ENCODE measurements at regions of chr11 and their contacts with region 1.

Region 1: GRCh38 chr11:76799066-76799804 is 16.1 kb downstream of the TSKU start:
- DNase-seq: peak; percentile 93
- ATAC-seq: peak; percentile 91

Region 2: GRCh38 chr11:76424379-76424778 is 374.9 kb before region 1 on chr11:
- intact Hi-C with region 1: no loop called
- DNase-seq: no peak
- ATAC-seq: no peak

Region 3: DNA sequence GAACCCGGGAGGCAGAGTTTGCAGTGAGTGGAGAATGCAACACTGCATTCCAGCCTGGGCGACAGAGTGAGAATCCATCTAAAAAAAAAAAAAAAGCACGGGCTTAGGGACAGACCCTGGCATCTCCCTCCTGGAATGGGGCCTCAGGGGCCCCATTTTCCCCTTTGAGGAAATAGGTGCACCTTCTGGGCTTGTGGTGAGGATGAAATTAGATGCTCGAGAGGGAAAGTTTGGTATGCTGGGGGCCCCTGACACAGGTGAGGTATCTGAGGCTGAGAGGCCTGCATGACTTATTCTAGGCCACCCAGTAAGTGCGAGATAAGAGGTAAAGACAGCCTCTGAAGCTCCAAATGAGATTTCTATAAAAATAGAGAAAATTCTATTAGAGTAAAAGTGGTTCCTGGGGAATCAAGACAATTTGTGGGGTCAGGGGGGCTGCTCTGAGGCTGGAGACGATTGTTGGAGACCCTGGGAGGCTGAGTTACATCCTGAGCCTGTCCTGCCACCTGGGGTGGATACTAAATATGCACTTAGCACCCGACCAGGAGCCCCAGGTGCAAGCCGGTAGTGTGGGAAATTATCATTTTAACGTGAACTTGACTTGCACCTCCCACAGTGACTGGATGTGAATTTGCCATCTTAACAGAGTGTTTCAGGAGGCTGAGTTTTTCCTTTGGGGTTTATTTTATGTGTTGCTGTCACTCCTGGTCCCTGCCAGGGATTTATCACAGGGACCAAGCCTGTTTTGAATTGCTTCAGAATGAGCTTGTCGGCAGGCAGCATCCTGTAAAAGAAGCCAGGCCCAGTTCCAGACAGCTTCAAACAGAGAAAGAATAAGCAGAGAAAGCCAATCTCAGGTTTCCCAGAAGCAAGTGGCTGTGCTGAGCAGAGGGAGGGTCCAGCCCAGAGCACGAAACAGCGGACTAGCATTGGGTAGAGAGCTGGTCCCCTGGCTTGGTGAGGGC is 64.5 kb before region 1 on chr11:
- intact Hi-C with region 1: loop called (anchors 1 kb)
- DNase-seq: no peak
- ATAC-seq: no peak

Region 4: DNA sequence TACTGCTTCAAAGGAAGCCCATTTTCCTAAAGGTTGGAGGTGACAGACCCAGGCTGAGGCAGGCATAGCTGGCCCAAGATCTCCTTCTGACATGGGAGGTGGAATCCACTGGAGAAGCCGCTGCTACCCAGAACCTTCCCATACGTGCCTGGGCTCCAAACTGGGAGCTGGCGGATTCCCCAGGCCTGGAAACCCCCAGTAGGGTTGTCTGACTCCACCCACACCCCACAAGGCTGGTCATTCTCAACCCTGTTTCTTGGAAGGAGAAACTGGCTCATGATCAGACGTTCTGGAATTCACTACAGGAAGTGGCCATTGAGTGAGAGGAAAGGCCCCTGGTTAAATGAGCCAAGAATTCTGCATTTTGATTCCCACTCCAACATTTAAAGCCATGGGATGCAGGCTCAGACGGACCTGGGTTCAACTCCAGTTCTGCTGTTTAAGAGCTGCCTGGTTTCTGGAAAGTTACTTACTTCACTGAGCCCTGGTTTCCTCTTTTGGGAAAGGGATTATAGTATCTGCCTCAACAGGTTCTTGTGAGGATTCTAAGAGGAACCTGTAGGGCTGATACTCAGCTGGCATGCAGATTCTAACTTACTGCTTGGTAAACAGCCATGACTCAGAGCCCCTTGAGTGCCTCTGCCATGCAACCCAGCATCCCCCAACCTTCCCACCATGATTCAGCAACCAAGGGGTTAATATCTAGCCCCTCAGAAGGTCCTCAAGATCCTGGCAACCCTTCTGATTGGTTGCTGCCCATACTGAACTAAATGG is 35.5 kb before region 1 on chr11:
- intact Hi-C with region 1: no loop called
- DNase-seq: no peak
- ATAC-seq: peak; percentile 23

Region 5: DNA sequence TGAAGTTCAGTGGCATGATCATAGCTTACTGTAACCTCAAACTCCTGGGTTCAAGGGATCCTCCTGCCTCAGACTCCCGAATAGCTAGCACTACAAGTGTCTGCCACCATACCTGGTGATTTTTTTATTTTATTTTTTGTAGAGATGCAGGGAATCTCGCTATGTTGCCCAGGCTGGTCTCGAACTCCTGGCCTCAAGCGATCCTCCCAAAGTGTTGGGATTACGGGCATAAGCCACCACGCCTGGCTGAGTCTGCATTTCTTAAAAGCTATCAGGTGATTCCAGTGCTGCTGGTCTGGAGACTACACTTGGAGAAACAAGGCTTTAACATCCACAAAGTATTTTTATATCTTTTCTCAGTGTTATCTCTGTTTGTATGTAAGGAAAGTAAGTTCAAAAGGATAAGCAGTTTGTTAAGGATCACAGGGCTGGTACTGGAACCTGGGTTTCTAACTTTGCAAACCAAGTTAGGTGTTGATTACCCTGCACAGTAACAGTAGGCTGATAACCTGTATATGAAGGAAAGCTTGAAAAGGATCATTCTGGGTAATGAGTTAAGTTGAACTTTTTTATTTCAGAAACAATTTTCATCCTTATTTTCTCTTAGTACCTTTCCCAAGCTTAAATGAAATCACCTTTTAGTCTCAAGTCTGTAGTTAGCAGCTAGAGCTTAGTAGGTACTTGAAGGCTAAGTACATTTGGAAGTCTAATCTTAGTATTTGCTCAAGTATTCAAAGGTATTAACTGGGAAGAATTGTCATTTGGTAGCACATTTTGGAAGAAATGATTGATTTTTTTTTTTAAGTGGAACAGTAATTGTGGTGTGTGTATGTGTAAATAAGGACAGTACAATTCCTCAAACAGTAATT is 74.0 kb after region 1 on chr11:
- intact Hi-C with region 1: no loop called
- DNase-seq: no peak
- ATAC-seq: no peak

Region 6: GRCh38 chr11:76885390-76886097 is 86.3 kb after region 1 on chr11:
- intact Hi-C with region 1: no loop called
- DNase-seq: no peak
- ATAC-seq: peak; percentile 39

Measured in Right ventricle myocardium inferior (tissue), 1 donor.